IMR-90 (cell line): ENCODE measurements at regions of chrX and their contacts with region 1.

Region 1: GRCh38 chrX:100768679-100769338 is 36.9 kb upstream of the SYTL4 start:
- DNase-seq: peak; percentile 62
- ATAC-seq: peak; percentile 99
- H3K4me3 ChIP-seq: no peak overlapping the region
- H3K27ac ChIP-seq: no peak overlapping the region
- H3K4me1 ChIP-seq: no peaks in the 10 kb centered on the region
- H3K27me3 ChIP-seq: peaks cover 2% of the 10 kb centered on the region
- CTCF ChIP-seq: peak; percentile 100
- POLR2A ChIP-seq: no peak
- RAD21 ChIP-seq: peak; percentile 94

Region 2: DNA sequence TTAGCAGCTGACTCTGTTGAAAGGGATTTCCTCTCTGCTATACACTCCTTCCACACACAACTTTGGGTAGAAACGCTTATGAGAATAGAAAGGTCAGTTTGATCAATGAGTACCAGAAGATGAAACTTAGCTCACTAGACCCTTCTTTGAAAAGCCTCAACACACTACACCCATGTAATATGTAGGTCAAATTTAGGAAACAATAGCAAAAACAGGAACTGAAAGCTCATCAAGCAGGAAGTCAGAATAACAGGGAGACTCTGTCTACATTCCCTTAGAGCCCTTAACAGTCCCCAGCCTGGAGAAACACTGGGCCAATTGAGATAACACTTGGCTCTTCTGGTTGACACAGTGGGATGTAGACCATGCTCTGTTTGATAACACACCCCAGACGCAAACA is 94.1 kb before region 1 on chrX:
- CTCF ChIA-PET with region 1: interaction called, 10 read pairs
- POLR2A ChIA-PET with region 1: no interaction called
- dilution Hi-C with region 1: no loop called
- in situ Hi-C with region 1: no loop called
- intact Hi-C with region 1: loop called (anchors 1 kb)
- DNase-seq: no peak
- ATAC-seq: no peak
- H3K4me3 ChIP-seq: no peak overlapping the region
- H3K27ac ChIP-seq: no peak overlapping the region
- H3K4me1 ChIP-seq: peaks cover 5% of the 10 kb centered on the region
- H3K27me3 ChIP-seq: no peaks in the 10 kb centered on the region; the same call in 1 of the 2 replicates
- CTCF ChIP-seq: no peak
- POLR2A ChIP-seq: no peak
- RAD21 ChIP-seq: no peak